AG04450 (cell line): ENCODE measurements at regions of chr3 and their contacts with region 1.

Region 1: DNA sequence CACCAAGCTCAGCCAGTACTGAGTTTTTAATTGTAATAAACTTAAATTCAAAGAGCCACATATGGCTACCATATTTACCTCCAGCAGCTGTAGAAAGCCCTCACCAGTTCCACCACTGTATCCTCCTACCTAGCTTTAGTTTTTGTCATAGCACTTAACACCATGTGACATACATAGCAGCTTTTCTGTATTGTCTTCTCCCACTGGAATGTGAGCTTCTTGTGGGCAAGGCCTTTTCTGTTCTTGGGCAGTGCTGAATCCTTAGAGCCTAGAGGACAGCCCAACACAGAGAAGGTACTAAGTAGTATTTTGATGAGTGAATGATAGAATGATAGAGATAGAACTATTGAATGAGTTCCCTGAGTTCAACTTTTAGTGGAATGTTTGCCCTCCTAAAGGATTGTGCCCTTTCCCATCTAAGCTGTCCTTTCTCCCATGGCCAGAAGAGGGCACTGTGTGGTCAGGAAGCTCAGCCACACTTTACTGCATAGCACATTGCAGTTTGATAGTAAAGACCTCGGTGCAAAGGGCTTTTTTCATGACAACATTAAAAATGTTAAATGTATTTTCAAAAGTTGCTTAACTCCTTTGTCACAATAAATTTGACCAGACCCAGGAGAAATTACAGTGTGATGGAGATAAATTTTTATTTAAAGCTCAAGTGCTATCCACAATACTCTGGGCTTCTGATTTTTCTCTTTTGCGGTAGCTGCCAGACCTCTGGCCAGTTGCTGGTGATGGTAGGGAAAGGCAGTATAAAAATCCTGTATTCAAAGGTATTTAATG is 115.8 kb downstream of the GHSR start:
- DNase-seq: no peak
- H3K4me3 ChIP-seq: no peak overlapping the region
- H3K27ac ChIP-seq: peak overlapping the region; percentile 58
- H3K27me3 ChIP-seq: no peaks in the 10 kb centered on the region
- CTCF ChIP-seq: peak; percentile 96

Region 2: DNA sequence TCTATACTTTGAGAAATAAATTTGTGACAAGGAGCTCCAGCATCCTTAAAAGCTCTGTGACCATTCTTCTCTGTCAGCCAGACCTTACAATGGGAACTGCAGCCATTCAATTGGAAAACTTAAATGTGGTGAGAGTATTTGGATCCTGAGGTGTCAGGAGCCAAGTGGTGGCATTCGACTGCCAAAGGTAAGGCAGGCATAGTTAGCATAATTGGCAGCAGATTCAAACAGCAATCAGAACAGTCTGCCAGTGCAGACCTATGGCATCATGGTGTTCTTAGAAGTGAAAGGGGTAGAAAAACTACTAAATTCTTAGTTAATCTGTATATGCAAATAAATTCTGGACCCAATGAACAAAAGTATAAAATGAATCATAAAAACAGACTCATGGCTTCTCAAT is 311.3 kb before region 1 on chr3:
- CTCF ChIA-PET with region 1: no interaction called
- POLR2A ChIA-PET with region 1: no interaction called
- DNase-seq: no peak
- H3K4me3 ChIP-seq: no peak overlapping the region
- H3K27ac ChIP-seq: no peak overlapping the region
- H3K27me3 ChIP-seq: no peaks in the 10 kb centered on the region
- CTCF ChIP-seq: no peak

Region 3: DNA sequence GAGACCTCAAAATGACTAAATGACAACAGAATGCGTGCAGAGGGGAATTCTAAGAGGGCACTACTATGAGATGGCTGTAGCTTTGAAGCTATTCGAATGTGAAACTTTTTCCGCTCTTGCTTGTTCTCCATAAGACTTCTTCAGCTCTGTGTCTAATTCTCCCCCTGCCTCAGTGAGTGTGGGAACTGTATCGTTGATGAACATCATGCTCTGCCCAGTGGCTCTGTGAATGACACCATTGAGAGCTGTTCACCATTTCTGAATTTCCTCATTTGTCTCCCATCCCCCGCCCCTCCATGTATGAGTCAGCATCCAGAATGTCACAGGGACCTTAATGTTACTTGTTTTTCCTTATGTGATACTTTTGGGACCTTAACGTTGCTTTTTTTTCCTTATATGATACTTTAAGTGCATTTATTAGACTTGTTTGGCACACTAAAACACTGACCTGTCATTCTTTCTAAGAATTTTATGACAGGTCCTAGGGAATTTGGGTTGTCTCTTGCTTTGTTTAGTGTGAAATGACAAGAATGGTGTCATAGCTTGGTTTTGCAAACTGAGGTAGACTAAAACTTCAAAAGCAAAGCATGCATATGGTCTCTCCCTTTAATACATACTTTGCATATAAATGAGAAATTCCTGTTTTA is 193.5 kb before region 1 on chr3:
- CTCF ChIA-PET with region 1: interaction called, 15 read pairs
- POLR2A ChIA-PET with region 1: no interaction called
- DNase-seq: no peak
- H3K4me3 ChIP-seq: no peak overlapping the region
- H3K27ac ChIP-seq: no peak overlapping the region
- H3K27me3 ChIP-seq: no peaks in the 10 kb centered on the region
- CTCF ChIP-seq: no peak

Region 4: DNA sequence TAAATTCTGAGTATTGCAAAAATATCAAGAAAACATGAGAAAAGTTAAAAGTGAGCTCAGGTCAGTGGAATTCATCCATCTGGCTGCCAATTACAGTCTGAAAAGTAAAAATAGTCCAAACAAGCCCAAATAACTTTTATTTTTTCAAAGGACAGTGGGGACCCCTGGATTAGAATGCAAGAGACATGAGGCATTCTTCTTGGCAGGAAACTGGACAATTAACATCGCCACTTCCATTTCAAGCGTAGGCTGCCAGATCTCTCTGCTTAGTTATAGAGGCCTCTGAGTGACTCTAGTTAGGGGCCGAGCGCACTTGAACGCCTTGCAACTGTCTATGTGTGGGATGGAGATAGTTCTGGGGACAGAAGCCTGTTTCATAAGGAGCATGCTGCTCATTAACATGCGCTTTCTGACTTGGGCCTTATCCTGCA is 73.3 kb before region 1 on chr3:
- CTCF ChIA-PET with region 1: interaction called, 10 read pairs
- POLR2A ChIA-PET with region 1: no interaction called
- DNase-seq: no peak
- H3K4me3 ChIP-seq: no peak overlapping the region
- H3K27ac ChIP-seq: peak overlapping the region; percentile 54
- H3K27me3 ChIP-seq: no peaks in the 10 kb centered on the region
- CTCF ChIP-seq: no peak

Region 5: DNA sequence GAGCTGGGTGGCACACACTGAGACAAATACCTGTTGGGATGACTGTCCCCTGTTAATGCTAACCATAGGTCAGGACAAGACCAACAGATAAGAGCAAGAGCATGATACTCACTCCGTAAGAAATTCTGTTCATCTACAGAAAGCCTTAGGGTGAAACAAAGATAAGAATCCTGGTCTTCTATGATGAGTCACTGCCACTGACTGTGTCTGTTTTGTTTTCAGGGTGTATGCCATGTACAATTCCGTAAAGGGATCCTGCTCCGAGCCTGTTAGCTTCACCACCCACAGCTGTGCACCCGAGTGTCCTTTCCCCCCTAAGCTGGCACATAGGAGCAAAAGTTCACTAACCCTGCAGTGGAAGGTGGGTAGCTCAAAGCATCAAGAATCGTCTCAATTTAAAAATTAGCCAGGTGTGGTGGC is 25.3 kb before region 1 on chr3:
- CTCF ChIA-PET with region 1: interaction called, 14 read pairs
- POLR2A ChIA-PET with region 1: no interaction called
- DNase-seq: no peak
- H3K4me3 ChIP-seq: no peak overlapping the region
- H3K27ac ChIP-seq: no peak overlapping the region
- H3K27me3 ChIP-seq: no peaks in the 10 kb centered on the region
- CTCF ChIP-seq: no peak

Region 6: GRCh38 chr3:172347895-172348680 is 15.6 kb after region 1 on chr3:
- CTCF ChIA-PET with region 1: interaction called, 59 read pairs
- POLR2A ChIA-PET with region 1: no interaction called
- DNase-seq: no peak
- H3K4me3 ChIP-seq: no peak overlapping the region
- H3K27ac ChIP-seq: no peak overlapping the region
- H3K27me3 ChIP-seq: no peaks in the 10 kb centered on the region
- CTCF ChIP-seq: no peak

Region 7: GRCh38 chr3:172653081-172653480 is 320.6 kb after region 1 on chr3:
- CTCF ChIA-PET with region 1: no interaction called
- POLR2A ChIA-PET with region 1: no interaction called
- DNase-seq: no peak
- H3K4me3 ChIP-seq: no peak overlapping the region
- H3K27ac ChIP-seq: no peak overlapping the region
- H3K27me3 ChIP-seq: no peaks in the 10 kb centered on the region
- CTCF ChIP-seq: no peak

Region 8: GRCh38 chr3:172666873-172667694 is 334.6 kb after region 1 on chr3:
- CTCF ChIA-PET with region 1: interaction called, 21 read pairs
- POLR2A ChIA-PET with region 1: no interaction called
- DNase-seq: peak; percentile 70
- H3K4me3 ChIP-seq: no peak overlapping the region
- H3K27ac ChIP-seq: no peak overlapping the region
- H3K27me3 ChIP-seq: no peaks in the 10 kb centered on the region
- CTCF ChIP-seq: peak; percentile 89